ENCODE measurements at regions of chr20 and their contacts with region 1.

Region 1: GRCh38 chr20:10673988-10674711 is at the start of gene JAG1:
- DNase-seq: peak in 1 of 2 donors; percentile 98
- H3K4me3 ChIP-seq: peak within 1 kb of the TSS; percentile 91 to 97
- H3K27ac ChIP-seq: peak within 1 kb of the TSS; percentile 97
- H3K4me1 ChIP-seq: peaks cover 20% of the 10 kb centered on the region
- H3K27me3 ChIP-seq: no peaks in the 10 kb centered on the region
- CTCF ChIP-seq: no peak
- POLR2A ChIP-seq: peak in 1 of 2 donors; percentile 93
- total RNA-seq, gene JAG1: 185 TPM

Region 2: GRCh38 chr20:8690074-8690473 is 1984.1 kb before region 1 on chr20:
- intact Hi-C with region 1: no loop called
- DNase-seq: no peak
- H3K4me3 ChIP-seq: no peak overlapping the region
- H3K27ac ChIP-seq: no peak overlapping the region
- H3K4me1 ChIP-seq: no peaks in the 10 kb centered on the region
- H3K27me3 ChIP-seq: no peaks in the 10 kb centered on the region
- CTCF ChIP-seq: no peak
- POLR2A ChIP-seq: no peak

Region 3: GRCh38 chr20:10434467-10434831 is 239.7 kb before region 1 on chr20:
- intact Hi-C with region 1: loop called (anchors 2 kb)
- DNase-seq: peak in 1 of 2 donors; percentile 99
- H3K4me3 ChIP-seq: peak overlapping the region; percentile 93 to 94
- H3K27ac ChIP-seq: peak overlapping the region; percentile 92
- H3K4me1 ChIP-seq: peaks cover 51% of the 10 kb centered on the region
- H3K27me3 ChIP-seq: no peaks in the 10 kb centered on the region
- CTCF ChIP-seq: peak in 1 of 3 experiments; percentile 13
- POLR2A ChIP-seq: peak in 1 of 2 donors; percentile 92

Region 4: GRCh38 chr20:10476319-10476724 is 197.8 kb before region 1 on chr20:
- intact Hi-C with region 1: loop called (anchors 5 kb)
- DNase-seq: no peak
- H3K4me3 ChIP-seq: no peak overlapping the region
- H3K27ac ChIP-seq: no peak overlapping the region
- H3K4me1 ChIP-seq: no peaks in the 10 kb centered on the region
- H3K27me3 ChIP-seq: no peaks in the 10 kb centered on the region
- CTCF ChIP-seq: no peak
- POLR2A ChIP-seq: no peak

Region 5: GRCh38 chr20:10553326-10553984 is 120.7 kb before region 1 on chr20:
- intact Hi-C with region 1: loop called (anchors 2 kb)
- DNase-seq: no peak
- H3K4me3 ChIP-seq: no peak overlapping the region
- H3K27ac ChIP-seq: no peak overlapping the region
- H3K4me1 ChIP-seq: peaks cover 39% of the 10 kb centered on the region
- H3K27me3 ChIP-seq: no peaks in the 10 kb centered on the region
- CTCF ChIP-seq: peak; percentile 22 to 86 (median 73)
- POLR2A ChIP-seq: no peak

Region 6: GRCh38 chr20:11274141-11274594 is 600.0 kb after region 1 on chr20:
- intact Hi-C with region 1: loop called (anchors 10 kb)
- DNase-seq: no peak
- H3K4me3 ChIP-seq: no peak overlapping the region
- H3K27ac ChIP-seq: no peak overlapping the region
- H3K4me1 ChIP-seq: peaks cover 12% of the 10 kb centered on the region
- H3K27me3 ChIP-seq: no peaks in the 10 kb centered on the region
- CTCF ChIP-seq: peak in 2 of 3 experiments; percentile 26 to 35
- POLR2A ChIP-seq: no peak